ENCODE measurements at regions of chr5 and their contacts with region 1.

Region 1: DNA sequence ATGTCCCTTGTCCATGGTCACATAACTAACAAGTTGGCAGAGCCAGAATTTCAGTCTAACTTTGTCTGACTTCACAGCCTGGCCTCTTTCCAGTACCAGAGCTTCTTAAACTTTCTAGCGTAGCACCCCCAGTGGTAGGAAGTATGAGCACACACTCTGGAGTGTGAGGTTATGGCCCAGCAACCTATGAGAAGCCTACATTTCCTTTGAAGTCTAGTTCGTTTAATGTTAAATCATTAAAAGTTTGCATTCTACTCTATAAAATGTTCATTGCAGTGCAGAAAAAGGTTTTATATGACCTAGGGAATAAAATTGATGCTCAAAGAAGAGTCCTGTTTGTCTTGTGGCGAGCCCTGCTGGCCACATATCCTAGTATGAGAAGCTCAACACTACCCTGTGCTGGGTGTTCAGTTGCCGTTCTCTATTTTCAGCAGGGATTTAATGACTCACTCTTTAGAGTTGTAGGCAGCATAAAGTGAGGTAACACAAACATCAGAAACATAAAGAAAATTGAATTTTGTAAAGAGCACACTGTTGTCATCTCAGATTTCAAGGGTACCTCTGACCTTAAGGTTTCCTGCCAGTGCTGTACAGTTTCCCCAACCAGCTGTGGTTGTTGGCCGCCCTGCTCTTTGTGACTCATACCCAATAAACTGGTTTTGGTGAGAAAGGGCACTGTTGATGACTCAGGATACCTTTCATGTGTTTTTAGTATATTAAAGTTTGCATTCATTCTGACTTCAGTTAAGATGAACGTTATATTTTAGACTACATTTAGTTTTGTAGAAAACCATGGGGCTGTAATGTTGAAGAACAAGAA is 14.3 kb downstream of the MCCC2 start:
- DNase-seq: peak; percentile 80
- H3K4me3 ChIP-seq: no peak overlapping the region
- CTCF ChIP-seq: peak; percentile 65

Region 2: GRCh38 chr5:71586941-71587765 is 14.3 kb before region 1 on chr5 and contains the start of gene MCCC2:
- CTCF ChIA-PET with region 1: interaction called, 18 read pairs
- POLR2A ChIA-PET with region 1: interaction called, 8 read pairs
- DNase-seq: peak; percentile 66
- H3K4me3 ChIP-seq: peak within 1 kb of the TSS; percentile 79
- CTCF ChIP-seq: no peak

Measured in AG04449 (cell line).